Psoas muscle (tissue), 8 donors: ENCODE measurements at regions of chr11 and their contacts with region 1.

Region 1: DNA sequence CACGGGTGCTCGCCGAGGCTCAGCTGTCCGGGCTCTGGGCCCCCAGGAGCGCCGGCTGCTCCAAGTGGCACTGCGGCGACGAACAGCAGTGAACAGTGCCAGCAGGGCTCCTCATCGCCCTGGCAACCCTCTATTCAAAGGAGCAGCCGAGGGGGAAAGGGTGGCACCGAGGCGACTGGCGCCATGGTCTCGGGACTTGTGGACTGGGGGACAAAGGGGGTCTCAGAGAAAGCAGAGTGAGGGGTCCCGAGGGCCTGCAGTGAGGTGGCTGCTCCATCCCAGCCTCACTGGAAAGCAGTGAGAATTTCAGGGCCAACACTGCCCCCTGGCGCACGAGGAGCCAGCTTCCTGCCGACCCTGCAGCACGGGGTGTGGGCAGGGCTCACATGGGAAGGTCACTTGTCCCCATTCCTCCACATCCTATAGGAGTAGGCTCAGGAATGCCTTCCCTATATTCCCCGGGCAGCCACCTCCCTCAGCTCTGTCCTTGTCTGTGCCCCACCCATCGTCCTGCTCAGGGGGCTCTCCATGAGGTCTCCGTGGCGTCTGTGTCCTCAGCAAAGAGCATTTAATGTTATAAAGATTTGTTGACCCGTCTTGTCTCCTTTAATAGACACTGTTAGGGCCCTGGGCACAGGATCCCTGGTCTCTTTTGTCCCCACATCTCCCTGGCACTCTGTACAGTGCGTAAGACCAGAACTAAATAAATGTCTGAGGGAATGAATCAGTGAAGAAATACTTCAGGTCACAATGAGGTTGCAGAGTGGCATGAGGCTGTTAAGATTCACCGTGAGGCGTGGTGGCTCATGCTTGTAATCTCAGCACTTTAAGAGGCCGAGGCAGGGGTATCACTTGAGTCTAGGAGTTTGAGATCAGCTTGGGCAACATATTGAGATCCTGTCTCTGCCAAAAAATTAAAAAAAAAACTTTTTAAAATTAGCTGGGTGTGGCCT is 26.4 kb downstream of the LRFN4 start:
- DNase-seq: peak; percentile 75 to 86
- ATAC-seq: peak; percentile 75 to 85 (median 82)
- H3K4me3 ChIP-seq: peak overlapping the region; percentile 46
- H3K27ac ChIP-seq: peak overlapping the region; percentile 70
- H3K4me1 ChIP-seq: peaks cover 54% of the 10 kb centered on the region
- H3K27me3 ChIP-seq: no peaks in the 10 kb centered on the region
- CTCF ChIP-seq: peak; percentile 67

Region 2: GRCh38 chr11:66694732-66695207 is 188.5 kb before region 1 on chr11:
- intact Hi-C with region 1: loop called (anchors 2 to 5 kb)
- DNase-seq: peak; percentile 84 to 91
- ATAC-seq: peak; percentile 88 to 94 (median 93)
- H3K4me3 ChIP-seq: no peak overlapping the region
- H3K27ac ChIP-seq: no peak overlapping the region
- H3K4me1 ChIP-seq: no peaks in the 10 kb centered on the region
- H3K27me3 ChIP-seq: no peaks in the 10 kb centered on the region
- CTCF ChIP-seq: peak; percentile 90

Region 3: DNA sequence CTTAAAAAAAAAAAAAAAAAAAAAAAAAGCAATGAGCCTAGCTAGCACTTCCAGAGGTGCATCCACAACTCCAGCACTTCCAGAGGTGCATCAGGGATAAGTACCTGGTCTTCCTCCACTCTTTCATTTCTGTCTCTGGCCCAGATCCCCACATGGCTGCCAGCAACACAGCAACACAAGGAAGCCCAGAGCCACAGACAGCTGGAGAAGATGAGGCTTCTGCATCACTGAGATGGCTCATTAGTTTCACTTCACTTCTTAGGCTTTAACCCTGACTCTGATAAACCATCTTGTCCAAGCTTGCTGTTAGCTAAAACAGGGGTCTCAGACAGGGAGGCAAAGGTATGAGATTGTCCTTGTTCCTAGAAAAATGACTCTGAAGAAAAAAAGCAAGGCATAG is 39.3 kb after region 1 on chr11:
- intact Hi-C with region 1: no loop called
- DNase-seq: no peak
- ATAC-seq: no peak
- H3K4me3 ChIP-seq: no peak overlapping the region
- H3K27ac ChIP-seq: no peak overlapping the region
- H3K4me1 ChIP-seq: no peaks in the 10 kb centered on the region
- H3K27me3 ChIP-seq: no peaks in the 10 kb centered on the region
- CTCF ChIP-seq: no peak